GM12878 (cell line): ENCODE measurements at regions of chr15 and their contacts with region 1.

Region 1: DNA sequence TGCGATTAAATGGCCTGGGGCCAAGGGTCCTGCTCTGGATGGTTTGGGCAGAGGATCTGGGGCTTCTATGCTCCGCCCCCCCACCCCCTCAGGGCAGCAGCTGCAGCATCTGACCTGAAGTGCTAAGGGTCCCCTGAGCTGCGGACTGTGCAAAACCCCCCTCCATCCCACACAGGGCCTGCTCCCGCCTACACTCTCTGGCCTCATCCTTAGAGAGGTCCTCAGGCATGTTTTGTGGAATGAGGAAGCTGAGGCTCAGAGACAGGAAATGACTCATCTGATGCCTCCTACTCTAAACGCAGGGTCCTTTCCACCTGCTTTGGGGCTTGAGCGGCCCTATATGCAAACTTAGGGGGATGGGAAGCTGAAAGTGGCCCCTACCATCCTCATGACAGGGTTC is 59.5 kb upstream of the CTSH start:
- DNase-seq: peak; percentile 86
- ATAC-seq: peak; percentile 87
- H3K4me3 ChIP-seq: peak overlapping the region; percentile 39; the same call in 1 of the 2 replicates
- H3K27ac ChIP-seq: peak overlapping the region; percentile 93
- H3K4me1 ChIP-seq: peaks cover 39% of the 10 kb centered on the region
- H3K27me3 ChIP-seq: no peaks in the 10 kb centered on the region
- CTCF ChIP-seq: no peak
- EP300 ChIP-seq: peak; percentile 74 to 95
- POLR2A ChIP-seq: 0 out of 2 replicates have a peak, but pooled peaks have one; percentile 28
- RAD21 ChIP-seq: peak; percentile 21; the same call in 1 of the 2 replicates

Region 2: GRCh38 chr15:78880242-78880533 is 124.1 kb before region 1 on chr15:
- CTCF ChIA-PET with region 1: interaction called, 10 read pairs
- POLR2A ChIA-PET with region 1: no interaction called
- RAD21 ChIA-PET with region 1: interaction called, 3 read pairs
- SMC1A ChIA-PET with region 1: interaction called, 3 read pairs
- in situ Hi-C with region 1: no loop called
- intact Hi-C with region 1: no loop called
- DNase-seq: no peak
- ATAC-seq: no peak
- H3K4me3 ChIP-seq: no peak overlapping the region
- H3K27ac ChIP-seq: no peak overlapping the region
- H3K4me1 ChIP-seq: peaks cover 16% of the 10 kb centered on the region
- H3K27me3 ChIP-seq: no peaks in the 10 kb centered on the region
- CTCF ChIP-seq: no peak
- EP300 ChIP-seq: no peak
- POLR2A ChIP-seq: no peak
- RAD21 ChIP-seq: no peak

Region 3: DNA sequence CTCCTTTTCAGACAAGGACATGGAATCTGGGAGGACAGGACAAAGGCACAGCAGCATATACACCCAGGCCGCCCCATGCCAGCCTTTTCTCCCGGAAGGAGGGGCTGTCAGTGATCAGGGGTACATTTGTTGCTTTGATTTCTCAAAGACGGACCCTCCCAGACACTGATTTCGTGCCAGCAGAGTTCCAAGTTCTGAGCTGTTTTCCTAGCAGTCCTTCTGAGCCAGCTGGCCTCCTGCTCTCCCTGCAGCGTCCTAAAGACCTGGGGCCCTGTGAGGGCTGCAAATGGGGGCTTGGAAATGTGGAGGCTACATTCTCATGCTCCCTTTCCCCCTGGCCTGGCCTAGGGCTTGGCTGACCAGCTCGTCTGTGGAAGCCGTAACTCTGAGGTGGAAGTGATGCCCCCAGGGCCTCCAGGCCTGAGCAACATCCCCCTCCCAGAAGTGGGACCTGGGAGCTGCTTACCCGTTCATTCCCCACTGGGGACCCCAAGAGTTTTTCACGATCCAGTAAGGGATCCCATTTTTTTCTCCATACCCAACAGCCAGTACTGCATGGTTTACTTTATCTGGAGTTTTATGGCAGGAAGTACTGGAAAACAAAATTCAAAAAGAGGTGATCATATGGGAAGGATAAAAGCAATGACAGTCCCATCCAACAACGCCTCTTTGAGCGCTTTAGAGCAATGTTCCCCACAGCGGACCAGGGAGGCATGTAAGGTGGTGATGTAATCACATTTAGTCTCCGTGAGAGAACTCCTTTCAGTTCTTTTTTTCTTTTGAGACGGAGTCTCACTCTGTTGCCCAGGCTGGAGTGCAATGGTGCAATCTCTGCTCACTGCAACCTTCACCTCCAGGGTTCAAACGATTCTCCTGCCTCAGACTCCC is 81.6 kb before region 1 on chr15:
- CTCF ChIA-PET with region 1: interaction called, 20 read pairs
- POLR2A ChIA-PET with region 1: interaction called, 3 read pairs
- RAD21 ChIA-PET with region 1: interaction called, 3 read pairs
- SMC1A ChIA-PET with region 1: interaction called, 7 read pairs
- in situ Hi-C with region 1: no loop called
- intact Hi-C with region 1: no loop called
- DNase-seq: no peak
- ATAC-seq: no peak
- H3K4me3 ChIP-seq: no peak overlapping the region
- H3K27ac ChIP-seq: no peak overlapping the region
- H3K4me1 ChIP-seq: no peaks in the 10 kb centered on the region; the same call in 1 of the 2 replicates
- H3K27me3 ChIP-seq: no peaks in the 10 kb centered on the region
- CTCF ChIP-seq: no peak
- EP300 ChIP-seq: no peak
- POLR2A ChIP-seq: peak; percentile 31; the same call in 1 of the 2 replicates
- RAD21 ChIP-seq: no peak

Region 4: GRCh38 chr15:78944669-78945407 is 59.5 kb before region 1 on chr15 and contains the start of gene CTSH:
- CTCF ChIA-PET with region 1: interaction called, 10 read pairs
- POLR2A ChIA-PET with region 1: interaction called, 15 read pairs
- RAD21 ChIA-PET with region 1: interaction called, 12 read pairs
- SMC1A ChIA-PET with region 1: interaction called, 17 read pairs
- in situ Hi-C with region 1: no loop called
- intact Hi-C with region 1: loop called (anchors 1 kb)
- DNase-seq: no peak
- ATAC-seq: peak; percentile 84
- H3K4me3 ChIP-seq: peak within 1 kb of the TSS; percentile 96
- H3K27ac ChIP-seq: peak within 1 kb of the TSS; percentile 96
- H3K4me1 ChIP-seq: peaks cover 4% of the 10 kb centered on the region; the same call in 1 of the 2 replicates
- H3K27me3 ChIP-seq: no peaks in the 10 kb centered on the region; a peak in 1 of 4 replicates
- CTCF ChIP-seq: no peak
- EP300 ChIP-seq: no peak
- POLR2A ChIP-seq: peak; percentile 91
- RAD21 ChIP-seq: 0 out of 2 replicates have a peak, but pooled peaks have one; percentile 9
- polyA plus RNA-seq, gene CTSH: 30.2 to 88.2 TPM

Region 5: GRCh38 chr15:79017953-79018352 is 13.6 kb after region 1 on chr15:
- CTCF ChIA-PET with region 1: interaction called, 13 read pairs
- POLR2A ChIA-PET with region 1: no interaction called
- RAD21 ChIA-PET with region 1: interaction called, 5 read pairs
- SMC1A ChIA-PET with region 1: interaction called, 5 read pairs
- in situ Hi-C with region 1: no loop called
- intact Hi-C with region 1: no loop called
- DNase-seq: no peak
- ATAC-seq: no peak
- H3K4me3 ChIP-seq: no peak overlapping the region
- H3K27ac ChIP-seq: no peak overlapping the region
- H3K4me1 ChIP-seq: peaks cover 27% of the 10 kb centered on the region
- H3K27me3 ChIP-seq: no peaks in the 10 kb centered on the region
- CTCF ChIP-seq: no peak
- EP300 ChIP-seq: no peak
- POLR2A ChIP-seq: no peak
- RAD21 ChIP-seq: no peak